ENCODE measurements at regions of chr11 and their contacts with region 1.

Region 1: GRCh38 chr11:94398101-94398500 is 3.1 kb downstream of the GPR83 start:
- DNase-seq: no peak
- H3K4me3 ChIP-seq: no peak overlapping the region
- H3K27ac ChIP-seq: no peak overlapping the region
- H3K4me1 ChIP-seq: peaks cover 7 to 14% (median 11%) of the 10 kb centered on the region in 4 donors
- H3K27me3 ChIP-seq: peaks cover 0 to 45% (median 22%) of the 10 kb centered on the region in 3 donors
- CTCF ChIP-seq: no peak
- EP300 ChIP-seq: no peak
- POLR2A ChIP-seq: no peak

Region 2: DNA sequence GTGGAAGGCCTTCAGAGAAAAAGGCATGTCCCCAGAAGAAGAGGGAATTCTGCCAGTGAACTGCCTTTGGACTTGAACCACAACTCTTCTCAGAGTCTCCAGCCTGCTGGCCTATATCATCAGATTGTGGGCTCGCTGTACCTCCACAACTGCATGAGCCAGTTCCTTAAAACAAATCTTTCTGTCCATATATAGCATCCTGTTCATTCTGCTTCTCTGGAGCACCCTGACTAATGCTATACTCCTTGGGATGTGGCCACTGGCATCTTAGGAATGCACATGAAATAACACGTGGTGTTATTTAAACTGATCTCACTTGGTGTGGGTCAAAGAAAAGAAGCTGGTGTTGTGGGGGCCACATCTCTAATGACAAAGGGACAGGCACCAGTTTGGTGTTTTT is 489.4 kb before region 1 on chr11:
- intact Hi-C with region 1: loop called (anchors 10 kb)
- DNase-seq: no peak
- H3K4me3 ChIP-seq: no peak overlapping the region
- H3K27ac ChIP-seq: no peak overlapping the region
- H3K4me1 ChIP-seq: no peaks in the 10 kb centered on the region
- H3K27me3 ChIP-seq: peaks cover 0 to 4% (median 0%) of the 10 kb centered on the region in 3 donors
- CTCF ChIP-seq: no peak
- EP300 ChIP-seq: no peak
- POLR2A ChIP-seq: no peak